Aorta (tissue), 5 donors: ENCODE measurements at regions of chr9 and their contacts with region 1.

Region 1: GRCh38 chr9:35470894-35471293 is 19.0 kb upstream of the RUSC2 start:
- DNase-seq: peak in 1 of 2 donors; percentile 56
- ATAC-seq: peak; percentile 90
- H3K4me3 ChIP-seq: no peak overlapping the region
- H3K27ac ChIP-seq: peak overlapping the region in 1 of 2 donors; percentile 71
- H3K4me1 ChIP-seq: peaks cover 0 to 8% of the 10 kb centered on the region in 2 donors
- H3K27me3 ChIP-seq: no peaks in the 10 kb centered on the region

Region 2: GRCh38 chr9:35258676-35259474 is 212.0 kb before region 1 on chr9:
- intact Hi-C with region 1: loop called in 1 of 2 experiments (anchors 5 kb)
- DNase-seq: peak; percentile 77 to 79
- ATAC-seq: peak; percentile 73
- H3K4me3 ChIP-seq: no peak overlapping the region
- H3K27ac ChIP-seq: no peak overlapping the region
- H3K4me1 ChIP-seq: no peaks in the 10 kb centered on the region
- H3K27me3 ChIP-seq: no peaks in the 10 kb centered on the region

Region 3: DNA sequence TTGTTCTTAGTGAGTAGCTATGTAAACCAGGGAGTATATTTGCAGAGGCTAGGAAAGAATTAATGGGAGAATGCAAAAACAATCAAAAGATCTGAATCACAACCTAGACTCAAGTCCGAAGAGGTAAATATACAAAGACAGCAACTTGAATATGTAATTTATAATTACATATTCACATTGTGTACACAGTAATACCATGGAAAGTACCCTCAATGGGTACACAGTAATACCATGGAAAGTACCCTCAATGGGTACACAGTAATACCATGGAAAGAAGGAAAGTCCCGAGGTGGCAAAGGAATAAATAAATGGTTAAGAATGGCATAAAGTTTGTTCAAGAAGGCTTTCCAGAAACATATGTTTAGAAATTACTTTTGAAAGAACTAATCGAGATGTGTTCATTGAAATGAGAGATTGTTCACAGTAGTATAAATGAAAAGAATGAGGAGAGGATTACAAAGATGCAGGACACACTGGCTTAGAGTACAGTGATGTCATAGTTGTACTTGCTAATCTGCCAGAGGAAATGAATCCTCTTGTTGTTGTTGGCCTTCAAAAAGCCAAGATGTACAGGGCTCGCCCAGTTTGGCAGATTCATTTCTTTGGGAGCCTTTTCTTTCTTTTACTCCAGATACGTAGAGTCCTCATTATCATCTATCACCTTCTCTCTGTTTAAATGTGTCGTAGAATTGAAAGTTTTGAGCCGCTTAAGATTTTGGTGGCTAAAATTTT is 193.1 kb before region 1 on chr9:
- intact Hi-C with region 1: loop called in 1 of 2 experiments (anchors 10 kb)
- DNase-seq: no peak
- ATAC-seq: peak; percentile 85
- H3K4me3 ChIP-seq: no peak overlapping the region
- H3K27ac ChIP-seq: no peak overlapping the region
- H3K4me1 ChIP-seq: no peaks in the 10 kb centered on the region
- H3K27me3 ChIP-seq: no peaks in the 10 kb centered on the region

Region 4: GRCh38 chr9:35385042-35385441 is 85.9 kb before region 1 on chr9:
- intact Hi-C with region 1: loop called in 1 of 2 experiments (anchors 10 kb)
- DNase-seq: no peak
- ATAC-seq: peak; percentile 73
- H3K4me3 ChIP-seq: no peak overlapping the region
- H3K27ac ChIP-seq: no peak overlapping the region
- H3K4me1 ChIP-seq: no peaks in the 10 kb centered on the region
- H3K27me3 ChIP-seq: no peaks in the 10 kb centered on the region